ENCODE measurements at regions of chr3 and their contacts with region 1.

Region 1: DNA sequence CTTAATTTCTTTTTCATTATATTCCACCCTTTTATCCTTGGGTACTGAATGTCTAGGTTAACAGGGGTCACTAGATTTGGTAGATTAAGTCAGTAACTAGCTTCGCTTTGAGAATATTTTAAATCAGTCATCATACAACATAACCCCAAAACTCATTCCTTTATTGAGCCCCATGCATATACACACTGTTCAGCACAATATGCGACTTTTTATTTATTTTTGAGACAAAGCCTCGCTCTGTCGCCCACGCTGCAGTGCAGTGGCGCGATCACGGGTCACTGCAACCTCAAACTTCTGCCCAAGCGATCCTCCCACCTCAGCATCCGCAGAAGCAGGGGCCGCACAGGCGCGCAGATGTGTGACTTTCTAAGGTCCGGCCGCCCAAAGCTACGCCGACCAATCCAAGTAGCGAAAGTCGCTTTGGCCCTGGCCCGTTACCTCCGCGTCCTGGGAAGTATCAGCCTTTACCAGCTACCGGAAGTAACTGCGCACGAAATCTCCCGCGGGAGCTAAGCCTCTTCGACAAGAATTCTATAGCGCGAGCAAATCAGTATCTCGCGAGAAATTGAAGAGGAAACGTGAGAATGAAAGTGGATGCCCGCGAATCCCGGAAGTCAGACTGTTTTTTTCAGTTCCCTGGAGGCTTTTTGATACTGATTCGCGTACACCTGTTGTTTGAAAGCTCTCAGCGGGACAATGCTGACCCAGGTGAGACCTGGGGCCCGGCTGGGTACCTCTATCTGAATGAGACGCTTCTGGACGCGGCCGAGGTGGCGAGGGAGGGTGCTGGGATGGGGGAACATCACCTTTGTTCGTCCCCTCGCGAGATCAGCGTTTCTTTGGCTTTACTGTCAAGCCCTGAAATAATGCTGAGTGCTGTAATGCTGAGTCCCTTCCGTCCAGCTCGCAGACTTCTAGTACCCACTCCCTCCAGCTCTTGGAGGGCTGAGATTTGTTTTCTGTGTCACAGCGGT is at the starts of genes DHFR2 and NSUN3:
- DNase-seq: peak; percentile 98
- ATAC-seq: peak; percentile 91
- H3K4me3 ChIP-seq: peak within 1 kb of the TSS; percentile 91
- H3K27ac ChIP-seq: peak within 1 kb of the TSS; percentile 91
- H3K4me1 ChIP-seq: peaks cover 18% of the 10 kb centered on the region
- H3K27me3 ChIP-seq: no peaks in the 10 kb centered on the region
- CTCF ChIP-seq: no peak
- total RNA-seq, gene DHFR2: 2.2 and 2.6 TPM in 2 replicates
- total RNA-seq, gene NSUN3: 4.4 and 5.3 TPM in 2 replicates

Region 2: GRCh38 chr3:93979833-93980676 is 82.7 kb before region 1 on chr3 and contains the start of gene ARL13B:
- CTCF ChIA-PET with region 1: no interaction called
- POLR2A ChIA-PET with region 1: interaction called, 8 read pairs
- intact Hi-C with region 1: loop called (anchors 1 kb)
- DNase-seq: peak; percentile 99
- ATAC-seq: peak; percentile 99
- H3K4me3 ChIP-seq: peak within 1 kb of the TSS; percentile 89
- H3K27ac ChIP-seq: peak within 1 kb of the TSS; percentile 36
- H3K4me1 ChIP-seq: peaks cover 21% of the 10 kb centered on the region; the same call in 1 of the 2 replicates
- H3K27me3 ChIP-seq: no peaks in the 10 kb centered on the region
- CTCF ChIP-seq: no peak
- total RNA-seq, gene ARL13B: 10.7 and 12.6 TPM in 2 replicates

Region 3: GRCh38 chr3:94028093-94028833 is 34.5 kb before region 1 on chr3 and contains the start of gene STX19:
- CTCF ChIA-PET with region 1: no interaction called
- POLR2A ChIA-PET with region 1: interaction called, 7 read pairs
- intact Hi-C with region 1: loop called (anchors 1 kb)
- DNase-seq: peak; percentile 70
- ATAC-seq: no peak; the same call in 1 of the 2 replicates
- H3K4me3 ChIP-seq: peak within 1 kb of the TSS; percentile 33; the same call in 1 of the 2 replicates
- H3K27ac ChIP-seq: peak within 1 kb of the TSS; percentile 10
- H3K4me1 ChIP-seq: peaks cover 34% of the 10 kb centered on the region
- H3K27me3 ChIP-seq: no peaks in the 10 kb centered on the region
- CTCF ChIP-seq: no peak
- total RNA-seq, gene STX19: not detected in 2 replicates